Mammary epithelial cell (primary cell): ENCODE measurements at regions of chr7 and their contacts with region 1.

Region 1: DNA sequence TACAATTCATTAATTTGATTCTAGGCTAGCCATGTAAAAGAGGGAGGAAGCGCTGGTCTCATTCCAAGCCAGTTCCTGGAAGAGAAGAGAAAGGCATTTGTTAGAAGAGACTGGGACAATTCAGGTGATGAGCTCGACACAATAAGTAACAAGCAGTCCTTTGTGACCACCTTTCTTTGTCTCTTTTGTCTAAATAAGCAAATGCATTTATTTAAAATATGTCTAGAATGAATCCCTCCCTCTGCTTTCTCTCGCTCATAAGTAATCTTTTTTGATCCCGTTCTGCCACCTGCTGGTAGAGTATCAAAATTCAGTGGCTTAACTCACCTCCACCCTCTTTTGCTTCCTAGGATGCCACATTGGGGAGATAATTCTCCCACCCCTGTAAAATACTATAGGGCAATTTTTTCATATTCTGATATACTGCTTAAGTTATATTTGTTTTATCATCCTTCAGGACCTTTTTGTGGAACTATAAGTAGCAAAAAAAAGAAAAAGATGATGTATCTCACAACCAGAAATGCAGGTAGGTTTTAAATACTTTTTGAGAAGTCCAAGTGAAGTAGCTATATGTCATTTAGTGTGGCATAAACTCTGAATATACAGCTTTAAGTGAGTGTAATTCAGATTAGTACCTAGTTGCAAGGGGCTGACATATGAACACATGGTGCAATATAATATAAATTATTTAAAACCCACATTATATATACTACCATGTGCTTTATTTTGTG is 91.5 kb downstream of the GSDME start:
- DNase-seq: peak; percentile 23
- H3K4me3 ChIP-seq: no peak overlapping the region
- H3K27ac ChIP-seq: no peak overlapping the region
- H3K4me1 ChIP-seq: peaks cover 10% of the 10 kb centered on the region
- H3K27me3 ChIP-seq: no peaks in the 10 kb centered on the region
- CTCF ChIP-seq: peak; percentile 59 to 68

Region 2: GRCh38 chr7:23863209-23863798 is 802.4 kb before region 1 on chr7:
- CTCF ChIA-PET with region 1: no interaction called
- dilution Hi-C with region 1: no loop called
- in situ Hi-C with region 1: loop called in 1 of 2 experiments (anchors 25 kb)
- intact Hi-C with region 1: loop called (anchors 5 kb)
- DNase-seq: peak; percentile 20
- H3K4me3 ChIP-seq: no peak overlapping the region
- H3K27ac ChIP-seq: no peak overlapping the region
- H3K4me1 ChIP-seq: no peaks in the 10 kb centered on the region
- H3K27me3 ChIP-seq: no peaks in the 10 kb centered on the region
- CTCF ChIP-seq: peak; percentile 73 to 94

Region 3: GRCh38 chr7:24290004-24290641 is 375.6 kb before region 1 on chr7:
- CTCF ChIA-PET with region 1: interaction called, 3 read pairs
- dilution Hi-C with region 1: no loop called
- in situ Hi-C with region 1: no loop called
- intact Hi-C with region 1: loop called (anchors 2 kb)
- DNase-seq: peak; percentile 48
- H3K4me3 ChIP-seq: no peak overlapping the region
- H3K27ac ChIP-seq: no peak overlapping the region
- H3K4me1 ChIP-seq: peaks cover 5% of the 10 kb centered on the region
- H3K27me3 ChIP-seq: peaks cover 14% of the 10 kb centered on the region
- CTCF ChIP-seq: peak; percentile 10 to 54

Region 4: GRCh38 chr7:24318326-24318725 is 347.4 kb before region 1 on chr7:
- CTCF ChIA-PET with region 1: interaction called, 3 read pairs
- dilution Hi-C with region 1: no loop called
- in situ Hi-C with region 1: loop called in 1 of 2 experiments (anchors 25 kb)
- intact Hi-C with region 1: no loop called
- DNase-seq: no peak
- H3K4me3 ChIP-seq: no peak overlapping the region
- H3K27ac ChIP-seq: no peak overlapping the region
- H3K4me1 ChIP-seq: no peaks in the 10 kb centered on the region
- H3K27me3 ChIP-seq: no peaks in the 10 kb centered on the region
- CTCF ChIP-seq: peak; percentile 51 to 71

Region 5: GRCh38 chr7:24401628-24402593 is 263.8 kb before region 1 on chr7:
- CTCF ChIA-PET with region 1: no interaction called
- dilution Hi-C with region 1: no loop called
- in situ Hi-C with region 1: loop called (anchors 10 kb)
- intact Hi-C with region 1: loop called (anchors 1 kb)
- DNase-seq: peak; percentile 30
- H3K4me3 ChIP-seq: peak overlapping the region; percentile 29 to 40 (median 35)
- H3K27ac ChIP-seq: peak overlapping the region; percentile 33
- H3K4me1 ChIP-seq: peaks cover 16% of the 10 kb centered on the region
- H3K27me3 ChIP-seq: no peaks in the 10 kb centered on the region
- CTCF ChIP-seq: peak; percentile 45 to 61

Region 6: DNA sequence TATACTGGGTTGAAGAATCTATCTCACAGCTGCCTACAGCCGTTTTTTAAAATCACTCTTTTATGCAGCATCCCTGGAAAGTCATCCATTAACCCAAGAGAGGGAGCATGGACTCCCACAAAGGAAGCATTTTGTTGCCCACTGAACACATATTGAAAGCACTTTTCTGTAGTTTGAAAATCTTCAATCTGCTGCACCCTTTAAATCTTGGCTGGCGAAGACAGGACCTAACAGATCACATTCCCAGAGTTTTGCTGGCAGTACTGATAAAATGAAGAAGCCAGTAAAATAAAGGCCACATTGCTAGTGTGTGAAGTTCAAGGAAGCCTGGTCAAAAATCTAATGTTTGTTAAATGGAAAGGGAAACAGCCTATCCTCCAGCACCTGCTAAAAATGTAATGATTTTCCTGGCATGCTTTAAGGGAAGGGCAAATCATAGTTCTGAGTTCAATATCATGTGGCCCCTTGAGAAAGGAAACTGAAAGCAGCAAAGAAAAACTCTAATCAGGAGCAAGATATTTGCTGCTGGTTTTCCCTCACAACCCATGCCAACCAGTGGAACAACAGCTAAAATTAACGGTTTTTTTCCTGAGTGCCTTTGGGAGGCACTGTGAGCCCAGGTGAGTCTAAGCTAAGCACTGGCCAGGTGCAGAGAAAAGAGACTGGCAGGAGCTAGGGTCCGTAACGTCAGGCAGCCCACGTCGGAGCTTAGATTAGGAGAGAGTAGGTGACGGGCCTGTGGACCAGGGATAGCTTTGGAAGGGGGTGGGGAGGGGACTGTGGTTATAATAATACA is 190.4 kb before region 1 on chr7:
- CTCF ChIA-PET with region 1: no interaction called
- dilution Hi-C with region 1: no loop called
- in situ Hi-C with region 1: no loop called
- intact Hi-C with region 1: loop called (anchors 2 kb)
- DNase-seq: no peak
- H3K4me3 ChIP-seq: no peak overlapping the region
- H3K27ac ChIP-seq: no peak overlapping the region
- H3K4me1 ChIP-seq: no peaks in the 10 kb centered on the region
- H3K27me3 ChIP-seq: peaks cover under 1% of the 10 kb centered on the region
- CTCF ChIP-seq: no peak

Region 7: GRCh38 chr7:24572997-24573625 is 92.6 kb before region 1 on chr7 and contains the start of gene PALS2:
- CTCF ChIA-PET with region 1: no interaction called
- dilution Hi-C with region 1: no loop called
- in situ Hi-C with region 1: loop called in 1 of 2 experiments (anchors 10 kb)
- intact Hi-C with region 1: loop called (anchors 1 kb)
- DNase-seq: peak; percentile 80
- H3K4me3 ChIP-seq: peak within 1 kb of the TSS; percentile 84 to 91 (median 88)
- H3K27ac ChIP-seq: peak within 1 kb of the TSS; percentile 90
- H3K4me1 ChIP-seq: peaks cover 17% of the 10 kb centered on the region
- H3K27me3 ChIP-seq: no peaks in the 10 kb centered on the region
- CTCF ChIP-seq: no peak
- total RNA-seq, gene PALS2: 36.2 to 39.5 TPM

Region 8: GRCh38 chr7:24812310-24812945 is 146.7 kb after region 1 on chr7:
- CTCF ChIA-PET with region 1: no interaction called
- dilution Hi-C with region 1: no loop called
- in situ Hi-C with region 1: no loop called
- intact Hi-C with region 1: no loop called
- DNase-seq: peak; percentile 39
- H3K4me3 ChIP-seq: no peak overlapping the region
- H3K27ac ChIP-seq: no peak overlapping the region
- H3K4me1 ChIP-seq: no peaks in the 10 kb centered on the region
- H3K27me3 ChIP-seq: no peaks in the 10 kb centered on the region
- CTCF ChIP-seq: peak; percentile 83 to 92